Activated CD4-positive, alpha-beta T cell treated with anti-CD3 and anti-CD28 coated beads, Interleukin-2, amount 10 ng/mL, durations not matched to agents 24 days and 14 days (primary cell): ENCODE measurements at regions of chr1 and their contacts with region 1.

Region 1: DNA sequence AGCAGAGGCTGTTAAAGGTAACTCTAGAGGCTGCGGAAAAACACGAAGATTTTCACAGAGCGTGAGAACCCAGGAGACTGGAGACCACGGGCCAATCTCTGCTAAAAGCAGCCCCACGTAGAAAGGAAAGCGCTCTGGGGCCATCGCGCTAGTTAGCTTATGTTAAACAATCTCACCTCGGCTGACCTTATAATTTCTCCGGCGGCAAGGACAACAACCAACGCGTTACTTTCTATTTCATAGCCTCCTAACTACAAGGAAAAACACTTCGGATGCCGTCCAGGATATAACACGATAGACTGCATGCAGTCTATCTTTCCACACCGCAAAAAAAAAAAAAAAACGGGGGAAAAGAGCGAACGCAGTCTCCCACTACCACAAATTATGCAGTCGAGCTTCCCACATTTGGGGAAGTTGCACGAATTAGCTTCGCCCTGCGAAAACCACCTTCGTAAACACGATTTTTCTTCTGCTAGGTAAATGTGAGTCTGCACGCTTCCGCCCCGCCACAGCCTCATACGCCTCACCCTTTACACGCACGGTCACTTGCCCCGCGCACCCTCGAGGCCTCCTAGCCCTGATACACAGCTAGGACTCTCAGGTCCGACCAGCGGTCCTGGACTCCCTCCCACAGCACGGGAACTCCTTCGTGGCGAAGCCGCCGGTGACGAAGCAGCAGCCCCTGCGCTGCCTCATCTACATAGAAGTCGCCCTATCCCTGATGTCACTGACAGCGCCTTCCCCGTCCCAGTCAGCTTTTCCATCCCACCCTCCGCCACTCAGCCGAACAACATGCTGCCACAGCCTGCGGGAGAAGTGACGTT is 87.8 kb downstream of the PRKAB2 start:
- DNase-seq: peak; percentile 92
- H3K4me3 Mint-ChIP-seq: peak overlapping the region; percentile 87
- H3K27ac Mint-ChIP-seq: peak overlapping the region; percentile 100
- H3K4me1 Mint-ChIP-seq: peaks cover 28% of the 10 kb centered on the region
- H3K27me3 Mint-ChIP-seq: peaks cover 76% of the 10 kb centered on the region

Region 2: GRCh38 chr1:147099192-147099591 is 14.7 kb after region 1 on chr1:
- intact Hi-C with region 1: no loop called
- DNase-seq: no peak
- H3K4me3 Mint-ChIP-seq: no peak overlapping the region
- H3K27ac Mint-ChIP-seq: no peak overlapping the region
- H3K4me1 Mint-ChIP-seq: no peaks in the 10 kb centered on the region
- H3K27me3 Mint-ChIP-seq: peaks cover 37% of the 10 kb centered on the region

Region 3: DNA sequence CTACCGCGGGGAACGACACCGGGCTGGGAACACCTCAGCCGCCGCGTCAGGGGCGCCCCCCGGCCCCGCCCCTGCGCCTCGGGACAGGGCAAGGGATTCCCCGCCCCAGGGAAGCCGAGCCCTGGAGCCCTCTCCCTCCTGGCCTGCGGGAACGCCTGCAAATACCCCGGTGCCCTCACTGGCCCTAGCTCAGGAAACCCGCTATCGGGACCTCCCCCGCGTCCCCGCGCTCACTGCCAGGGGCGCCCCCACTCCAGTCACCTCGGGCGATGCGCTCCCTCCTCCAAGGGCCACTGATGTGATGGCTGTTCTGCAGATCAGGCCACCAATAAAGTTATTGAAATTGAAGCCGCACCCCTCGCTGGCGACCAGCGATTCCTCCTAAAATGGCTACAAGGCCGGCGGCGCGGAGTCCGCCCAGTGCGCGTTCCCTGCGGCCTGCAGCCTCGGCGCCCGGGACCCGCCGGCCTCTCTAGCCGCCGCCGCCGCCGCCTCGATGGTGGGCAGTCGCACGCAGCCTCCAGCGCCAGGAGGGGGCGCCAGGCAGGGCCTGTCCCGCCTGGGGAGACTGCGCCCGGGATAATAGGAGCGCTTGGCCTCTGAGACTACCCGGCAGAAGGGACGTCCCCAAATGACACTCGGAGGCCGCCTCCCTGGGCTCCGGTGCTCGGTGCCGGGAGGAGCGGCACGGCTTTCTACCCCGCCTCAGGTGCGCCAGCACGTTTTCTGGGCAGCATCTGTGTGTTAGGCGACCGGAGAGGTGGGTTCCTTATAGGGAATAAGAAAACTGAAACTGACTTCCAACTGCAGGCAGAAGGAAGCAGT is 87.9 kb after region 1 on chr1 and contains the start of gene PRKAB2:
- intact Hi-C with region 1: loop called (anchors 2 kb)
- DNase-seq: peak; percentile 97
- H3K4me3 Mint-ChIP-seq: peak within 1 kb of the TSS; percentile 98
- H3K27ac Mint-ChIP-seq: peak within 1 kb of the TSS; percentile 96
- H3K4me1 Mint-ChIP-seq: peaks cover 32% of the 10 kb centered on the region
- H3K27me3 Mint-ChIP-seq: peaks cover 2% of the 10 kb centered on the region
- total RNA-seq, gene PRKAB2: 6.1 and 7.4 TPM in 2 replicates

Region 4: GRCh38 chr1:147235822-147236221 is 151.3 kb after region 1 on chr1:
- intact Hi-C with region 1: no loop called
- DNase-seq: no peak
- H3K4me3 Mint-ChIP-seq: no peak overlapping the region
- H3K27ac Mint-ChIP-seq: no peak overlapping the region
- H3K4me1 Mint-ChIP-seq: no peaks in the 10 kb centered on the region
- H3K27me3 Mint-ChIP-seq: peaks cover 15% of the 10 kb centered on the region

Region 5: DNA sequence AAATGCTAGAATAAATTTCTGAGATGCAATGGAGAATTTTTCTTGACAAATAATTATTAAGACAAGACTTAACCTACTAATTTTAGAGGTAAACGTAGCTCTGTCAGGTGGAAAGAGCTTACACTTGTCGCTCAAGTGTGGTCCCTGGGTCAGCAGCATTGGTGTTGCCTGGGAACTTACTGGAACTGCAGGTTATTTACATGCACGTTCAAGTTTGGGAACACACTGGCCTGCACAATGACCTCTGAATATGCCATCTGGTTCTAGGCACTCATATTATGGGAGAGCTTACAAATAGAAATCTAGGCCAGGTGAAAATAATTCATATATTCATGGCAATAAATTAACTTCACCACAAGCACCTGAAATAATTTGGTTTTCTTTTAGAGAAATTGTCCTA is 368.3 kb after region 1 on chr1:
- intact Hi-C with region 1: no loop called
- DNase-seq: no peak
- H3K4me3 Mint-ChIP-seq: no peak overlapping the region
- H3K27ac Mint-ChIP-seq: no peak overlapping the region
- H3K4me1 Mint-ChIP-seq: no peaks in the 10 kb centered on the region
- H3K27me3 Mint-ChIP-seq: peaks cover 7% of the 10 kb centered on the region

Region 6: GRCh38 chr1:147878022-147878421 is 793.5 kb after region 1 on chr1:
- intact Hi-C with region 1: no loop called
- DNase-seq: no peak
- H3K4me3 Mint-ChIP-seq: no peak overlapping the region
- H3K27ac Mint-ChIP-seq: no peak overlapping the region
- H3K4me1 Mint-ChIP-seq: no peaks in the 10 kb centered on the region
- H3K27me3 Mint-ChIP-seq: peaks cover 23% of the 10 kb centered on the region

Region 7: DNA sequence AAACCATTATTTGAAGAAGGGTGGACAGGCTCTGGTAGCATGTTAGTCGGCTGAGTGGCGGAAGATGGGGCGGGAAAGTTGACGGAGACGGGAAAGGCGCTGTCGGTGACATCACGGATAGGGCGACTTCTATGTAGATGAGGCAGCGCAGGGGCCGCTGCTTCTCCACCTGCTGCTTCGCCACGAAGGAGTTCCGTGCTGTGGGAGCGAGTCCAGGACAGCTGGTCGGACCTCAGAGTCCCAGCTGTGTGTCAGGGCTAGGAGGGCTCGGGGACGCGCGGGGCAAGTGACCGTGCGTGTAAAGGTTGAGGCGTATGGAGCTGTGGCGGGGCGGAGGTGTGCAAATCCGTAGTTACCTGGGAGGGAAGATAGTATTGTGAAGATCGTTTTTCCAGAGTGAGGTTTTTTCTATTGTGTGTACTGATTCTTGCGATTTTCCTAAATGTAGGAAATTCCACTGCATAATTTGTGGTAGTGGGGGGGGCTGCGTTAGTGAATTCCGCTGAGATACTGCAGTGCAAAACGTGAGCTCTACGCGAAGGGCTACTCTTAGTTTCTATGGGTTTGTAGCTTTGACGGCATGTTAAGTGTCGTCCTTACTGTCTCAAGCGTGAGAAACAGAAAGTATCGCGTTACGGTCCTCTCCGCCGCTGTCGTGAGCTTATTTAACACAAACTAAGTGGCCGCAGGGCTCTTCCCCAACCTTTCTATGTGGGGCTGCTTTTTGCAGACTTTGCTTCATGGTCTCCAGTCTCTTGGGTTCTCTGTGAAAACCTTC is 1178.8 kb after region 1 on chr1:
- intact Hi-C with region 1: loop called (anchors 5 kb)
- DNase-seq: peak; percentile 85
- H3K4me3 Mint-ChIP-seq: peak overlapping the region; percentile 93
- H3K27ac Mint-ChIP-seq: peak overlapping the region; percentile 92
- H3K4me1 Mint-ChIP-seq: peaks cover 18% of the 10 kb centered on the region
- H3K27me3 Mint-ChIP-seq: peaks cover 30% of the 10 kb centered on the region